PC-3 (cell line): ENCODE measurements at regions of chr16 and their contacts with region 1.

Region 1: GRCh38 chr16:2023098-2023925 is 3.4 kb upstream of the NHERF2 start:
- DNase-seq: peak; percentile 89
- ATAC-seq: peak; percentile 59
- H3K4me3 ChIP-seq: peak overlapping the region; percentile 62
- H3K27ac ChIP-seq: peak overlapping the region; percentile 39; the same call in 1 of the 2 replicates
- H3K4me1 ChIP-seq: peaks cover 17% of the 10 kb centered on the region
- H3K27me3 ChIP-seq: no peaks in the 10 kb centered on the region; the same call in 1 of the 2 replicates
- CTCF ChIP-seq: peak; percentile 77

Region 2: GRCh38 chr16:1991948-1992703 is 31.2 kb before region 1 on chr16:
- CTCF ChIA-PET with region 1: interaction called, 10 read pairs
- POLR2A ChIA-PET with region 1: interaction called, 15 read pairs
- intact Hi-C with region 1: no loop called
- DNase-seq: peak; percentile 63
- ATAC-seq: peak; percentile 23
- H3K4me3 ChIP-seq: no peak overlapping the region
- H3K27ac ChIP-seq: no peak overlapping the region
- H3K4me1 ChIP-seq: peaks cover 4% of the 10 kb centered on the region; the same call in 1 of the 2 replicates
- H3K27me3 ChIP-seq: no peaks in the 10 kb centered on the region
- CTCF ChIP-seq: no peak

Region 3: DNA sequence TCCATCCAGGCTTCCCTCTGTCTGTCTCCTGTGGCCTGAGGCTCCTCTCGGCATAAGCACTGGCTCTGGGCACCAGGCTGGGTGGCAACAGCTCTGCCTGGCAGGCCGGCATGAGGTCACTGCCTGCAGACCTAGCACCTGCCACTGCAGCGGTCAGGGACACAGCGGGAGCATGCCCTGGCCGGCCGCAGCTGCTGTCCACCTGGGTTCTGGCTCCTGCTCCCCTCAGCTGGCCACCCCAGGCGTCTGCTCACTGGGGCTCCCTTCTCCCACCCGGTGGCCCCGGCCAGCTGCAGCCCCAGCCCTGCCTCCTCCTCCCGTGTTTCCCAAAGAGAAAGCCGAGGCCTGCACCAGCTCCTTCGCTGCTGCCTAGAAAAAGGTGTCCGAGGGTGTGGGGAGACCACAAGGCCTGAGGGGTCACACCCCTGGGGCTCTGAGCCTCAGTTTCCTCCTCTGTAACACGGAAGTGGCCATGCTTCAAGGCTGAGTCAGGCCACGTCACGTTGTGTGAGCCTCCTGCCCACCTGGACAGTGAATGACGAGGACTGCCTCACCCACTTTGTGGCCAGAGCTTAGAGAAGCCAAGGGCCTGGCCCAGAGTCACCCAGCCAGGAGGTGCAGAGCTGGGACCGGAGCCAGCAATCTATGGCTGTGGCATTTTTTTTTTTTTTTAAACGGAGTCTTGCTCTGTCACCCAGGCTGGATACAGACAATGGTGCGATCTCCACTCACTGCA is 17.6 kb after region 1 on chr16:
- CTCF ChIA-PET with region 1: interaction called, 20 read pairs
- POLR2A ChIA-PET with region 1: interaction called, 4 read pairs
- intact Hi-C with region 1: no loop called
- DNase-seq: peak; percentile 91
- ATAC-seq: peak; percentile 60
- H3K4me3 ChIP-seq: no peak overlapping the region
- H3K27ac ChIP-seq: peak overlapping the region; percentile 100
- H3K4me1 ChIP-seq: peaks cover 70% of the 10 kb centered on the region
- H3K27me3 ChIP-seq: no peaks in the 10 kb centered on the region
- CTCF ChIP-seq: no peak

Region 4: DNA sequence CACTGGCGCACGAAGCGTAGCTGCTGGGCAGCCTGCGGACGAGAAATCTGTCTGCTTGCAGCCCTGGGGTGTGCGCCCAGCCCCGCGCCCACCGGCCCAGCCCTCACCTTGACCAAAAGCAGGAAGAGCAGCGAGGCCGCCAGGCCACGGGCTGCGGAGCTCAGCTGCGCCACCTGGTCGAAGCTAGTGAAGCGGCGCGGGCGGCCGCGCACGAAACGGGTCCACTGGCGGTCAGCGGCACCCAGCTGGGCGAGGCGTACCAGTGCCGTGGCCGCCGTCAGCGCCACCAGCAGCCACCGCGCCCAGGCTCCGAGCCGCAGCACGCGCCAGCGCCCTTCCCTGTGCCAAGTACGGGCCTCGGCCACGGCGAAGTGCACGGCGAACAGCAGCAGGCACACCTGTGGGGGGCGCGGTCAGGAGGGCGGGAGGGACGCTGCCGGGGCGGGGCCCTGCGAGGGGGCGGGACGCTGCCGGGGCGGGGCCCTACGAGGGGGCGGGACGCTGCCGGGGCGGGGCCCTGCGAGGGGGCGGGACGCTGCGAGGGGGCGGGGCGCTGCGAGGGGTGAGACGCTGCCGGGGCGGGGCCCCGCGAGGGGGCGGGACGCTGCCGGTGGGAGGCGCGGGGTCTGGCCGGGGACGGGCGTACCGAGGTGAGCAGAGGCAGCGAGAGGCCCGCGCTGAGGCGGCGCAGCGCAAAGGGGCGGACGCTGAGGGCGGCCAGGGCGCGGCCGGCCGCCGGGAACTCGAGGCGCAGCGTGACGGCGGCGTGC is 67.7 kb after region 1 on chr16:
- CTCF ChIA-PET with region 1: interaction called, 15 read pairs
- POLR2A ChIA-PET with region 1: no interaction called
- intact Hi-C with region 1: no loop called
- DNase-seq: peak; percentile 84
- ATAC-seq: peak; percentile 87
- H3K4me3 ChIP-seq: peak overlapping the region; percentile 48
- H3K27ac ChIP-seq: no peak overlapping the region
- H3K4me1 ChIP-seq: peaks cover 8% of the 10 kb centered on the region
- H3K27me3 ChIP-seq: no peaks in the 10 kb centered on the region
- CTCF ChIP-seq: peak; percentile 55